A673 (cell line): ENCODE measurements at regions of chr19 and their contacts with region 1.

Region 1: GRCh38 chr19:5091018-5091683 is 122.2 kb downstream of the KDM4B start:
- DNase-seq: peak; percentile 94
- H3K4me3 ChIP-seq: no peak overlapping the region
- H3K27ac ChIP-seq: peak overlapping the region; percentile 100
- H3K4me1 ChIP-seq: peaks cover 64% of the 10 kb centered on the region
- H3K27me3 ChIP-seq: no peaks in the 10 kb centered on the region
- CTCF ChIP-seq: no peak

Region 2: GRCh38 chr19:5038631-5039271 is 52.4 kb before region 1 on chr19:
- CTCF ChIA-PET with region 1: no interaction called
- POLR2A ChIA-PET with region 1: no interaction called
- intact Hi-C with region 1: no loop called
- DNase-seq: peak; percentile 73
- H3K4me3 ChIP-seq: no peak overlapping the region
- H3K27ac ChIP-seq: peak overlapping the region; percentile 43
- H3K4me1 ChIP-seq: peaks cover 39% of the 10 kb centered on the region
- H3K27me3 ChIP-seq: no peaks in the 10 kb centered on the region
- CTCF ChIP-seq: peak; percentile 70

Region 3: GRCh38 chr19:5345895-5346386 is 254.8 kb after region 1 on chr19:
- CTCF ChIA-PET with region 1: no interaction called
- POLR2A ChIA-PET with region 1: interaction called, 14 read pairs
- intact Hi-C with region 1: no loop called
- DNase-seq: peak; percentile 44
- H3K4me3 ChIP-seq: no peak overlapping the region
- H3K27ac ChIP-seq: no peak overlapping the region
- H3K4me1 ChIP-seq: no peaks in the 10 kb centered on the region
- H3K27me3 ChIP-seq: no peaks in the 10 kb centered on the region
- CTCF ChIP-seq: no peak

Region 4: GRCh38 chr19:5526691-5527090 is 435.5 kb after region 1 on chr19:
- CTCF ChIA-PET with region 1: no interaction called
- POLR2A ChIA-PET with region 1: interaction called, 10 read pairs
- intact Hi-C with region 1: no loop called
- DNase-seq: no peak
- H3K4me3 ChIP-seq: no peak overlapping the region
- H3K27ac ChIP-seq: no peak overlapping the region
- H3K4me1 ChIP-seq: no peaks in the 10 kb centered on the region
- H3K27me3 ChIP-seq: no peaks in the 10 kb centered on the region
- CTCF ChIP-seq: no peak